PC-3 (cell line): ENCODE measurements at regions of chr16 and their contacts with region 1.

Region 1: DNA sequence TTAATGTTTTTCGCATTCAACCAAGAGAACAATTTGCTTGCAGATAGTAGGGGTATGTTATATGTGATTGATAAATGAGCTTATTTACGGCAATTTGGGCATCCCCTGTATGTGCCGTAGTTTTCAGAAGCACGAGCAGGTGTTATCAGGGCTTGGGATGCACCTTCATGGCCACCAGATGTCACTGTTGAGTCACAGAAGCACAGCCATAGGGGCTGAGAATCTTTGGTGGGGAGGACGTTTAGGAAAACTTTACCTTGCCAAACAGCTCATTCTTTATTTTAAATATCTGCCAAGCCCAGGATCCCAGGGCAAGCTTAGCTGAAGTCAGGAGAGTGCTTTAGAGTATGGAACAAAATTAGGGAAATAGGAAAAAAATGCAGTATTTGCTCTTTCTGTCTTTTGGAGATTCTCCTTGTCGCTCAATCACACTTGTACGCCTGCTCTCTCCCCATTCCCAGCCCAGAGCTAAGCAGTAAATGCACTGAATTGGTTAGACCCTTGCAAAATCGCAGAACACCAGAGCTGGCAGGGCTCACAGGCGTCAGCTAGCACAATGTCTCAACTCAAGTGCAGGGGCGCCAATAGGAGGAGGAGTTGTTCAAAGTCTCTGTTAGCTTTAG is 93.6 kb upstream of the MPHOSPH6 start:
- DNase-seq: peak; percentile 63
- ATAC-seq: peak; percentile 80
- H3K4me3 ChIP-seq: no peak overlapping the region
- H3K27ac ChIP-seq: no peak overlapping the region
- H3K4me1 ChIP-seq: no peaks in the 10 kb centered on the region
- H3K27me3 ChIP-seq: peaks cover 31% of the 10 kb centered on the region
- CTCF ChIP-seq: peak; percentile 87

Region 2: DNA sequence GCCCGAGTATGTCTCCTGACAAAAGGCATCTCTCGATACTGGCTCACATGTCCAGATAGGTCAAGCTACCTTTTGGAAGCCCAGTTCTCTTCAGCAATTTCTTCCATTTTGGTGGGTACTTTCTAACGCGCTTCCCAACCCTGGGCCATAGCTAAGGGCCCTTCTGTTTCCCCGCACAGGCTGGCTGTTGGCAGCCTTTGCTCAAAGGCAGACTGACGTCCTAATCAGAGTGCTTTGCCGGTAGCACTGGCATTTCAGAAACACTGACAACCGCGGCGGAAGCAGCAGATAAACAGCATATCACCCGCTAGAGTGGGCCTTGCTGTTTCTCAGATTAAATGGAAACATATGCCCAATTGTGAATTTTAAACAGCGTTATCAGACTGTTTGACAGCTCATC is 44.3 kb before region 1 on chr16:
- CTCF ChIA-PET with region 1: no interaction called
- POLR2A ChIA-PET with region 1: no interaction called
- intact Hi-C with region 1: no loop called
- DNase-seq: no peak
- ATAC-seq: no peak
- H3K4me3 ChIP-seq: no peak overlapping the region
- H3K27ac ChIP-seq: no peak overlapping the region
- H3K4me1 ChIP-seq: no peaks in the 10 kb centered on the region
- H3K27me3 ChIP-seq: peaks cover 14% of the 10 kb centered on the region; the same call in 1 of the 2 replicates
- CTCF ChIP-seq: no peak

Region 3: GRCh38 chr16:82344157-82344556 is 80.5 kb after region 1 on chr16:
- CTCF ChIA-PET with region 1: interaction called, 8 read pairs
- POLR2A ChIA-PET with region 1: no interaction called
- intact Hi-C with region 1: loop called (anchors 1 kb)
- DNase-seq: peak; percentile 10
- ATAC-seq: peak; percentile 49; the same call in 1 of the 2 replicates
- H3K4me3 ChIP-seq: no peak overlapping the region
- H3K27ac ChIP-seq: no peak overlapping the region
- H3K4me1 ChIP-seq: no peaks in the 10 kb centered on the region
- H3K27me3 ChIP-seq: no peaks in the 10 kb centered on the region
- CTCF ChIP-seq: peak; percentile 42

Region 4: GRCh38 chr16:82580298-82580890 is 316.8 kb after region 1 on chr16:
- CTCF ChIA-PET with region 1: no interaction called
- POLR2A ChIA-PET with region 1: no interaction called
- intact Hi-C with region 1: loop called (anchors 2 kb)
- DNase-seq: peak; percentile 10
- ATAC-seq: peak; percentile 59; the same call in 1 of the 2 replicates
- H3K4me3 ChIP-seq: no peak overlapping the region
- H3K27ac ChIP-seq: no peak overlapping the region
- H3K4me1 ChIP-seq: no peaks in the 10 kb centered on the region
- H3K27me3 ChIP-seq: peaks cover 17% of the 10 kb centered on the region
- CTCF ChIP-seq: peak; percentile 50

Region 5: DNA sequence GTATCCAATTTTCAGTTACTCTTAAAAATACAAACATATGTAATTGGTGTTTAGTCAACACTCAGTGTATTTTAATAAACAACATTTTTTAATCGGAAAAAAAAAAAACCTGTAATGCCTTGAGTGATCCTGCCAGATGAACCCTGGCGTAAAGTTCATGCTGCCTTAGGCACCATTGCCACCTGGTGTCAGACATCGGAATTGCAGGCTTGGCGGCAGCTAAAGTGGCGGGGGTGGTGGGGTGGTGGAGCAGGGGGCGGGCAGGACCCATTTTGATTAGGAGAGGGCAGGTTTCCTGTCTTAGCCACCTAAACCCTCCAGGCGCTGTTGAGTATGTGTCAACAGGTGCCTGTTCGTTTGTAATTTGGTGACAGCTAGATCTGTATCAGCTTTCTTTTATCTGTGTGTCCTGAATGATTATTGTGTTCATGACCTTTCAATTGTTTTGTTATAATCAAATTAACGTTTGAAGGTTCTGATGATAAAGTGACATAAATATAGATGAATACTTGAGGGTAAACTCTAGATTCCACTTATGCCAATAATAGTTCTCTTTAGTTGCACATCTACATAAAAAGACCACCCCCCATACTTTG is 951.9 kb after region 1 on chr16:
- CTCF ChIA-PET with region 1: no interaction called
- POLR2A ChIA-PET with region 1: no interaction called
- intact Hi-C with region 1: loop called (anchors 10 kb)
- DNase-seq: peak; percentile 62
- ATAC-seq: peak; percentile 31; the same call in 1 of the 2 replicates
- H3K4me3 ChIP-seq: no peak overlapping the region
- H3K27ac ChIP-seq: no peak overlapping the region
- H3K4me1 ChIP-seq: no peaks in the 10 kb centered on the region
- H3K27me3 ChIP-seq: no peaks in the 10 kb centered on the region
- CTCF ChIP-seq: peak; percentile 71